ENCODE measurements at regions of chr1 and their contacts with region 1.

Region 1: DNA sequence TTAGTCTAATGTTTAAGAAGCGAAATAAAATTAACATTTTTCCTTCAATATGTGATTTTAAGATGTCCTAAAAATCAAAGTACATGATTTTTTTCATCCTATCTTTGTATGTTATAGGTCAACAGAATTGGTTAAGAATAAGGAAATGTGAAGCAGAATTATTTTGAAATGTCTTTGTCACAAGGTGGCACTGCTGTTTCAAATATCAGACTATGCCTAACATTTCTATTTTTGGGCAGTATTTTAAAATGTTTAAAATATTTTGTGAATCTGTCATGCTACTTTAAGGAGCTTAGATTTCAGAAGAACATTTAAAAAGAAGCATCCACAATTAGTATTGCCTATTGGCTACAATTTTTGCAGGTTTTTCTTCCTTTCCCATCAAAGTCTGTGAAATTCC is 38.7 kb downstream of the AMY1C start:
- DNase-seq: peak; percentile 42
- H3K4me3 Mint-ChIP-seq: no peak overlapping the region
- H3K27ac Mint-ChIP-seq: no peak overlapping the region
- H3K4me1 Mint-ChIP-seq: no peaks in the 10 kb centered on the region
- H3K27me3 Mint-ChIP-seq: peaks cover 5% of the 10 kb centered on the region
- CTCF ChIP-seq: peak; percentile 35

Region 2: DNA sequence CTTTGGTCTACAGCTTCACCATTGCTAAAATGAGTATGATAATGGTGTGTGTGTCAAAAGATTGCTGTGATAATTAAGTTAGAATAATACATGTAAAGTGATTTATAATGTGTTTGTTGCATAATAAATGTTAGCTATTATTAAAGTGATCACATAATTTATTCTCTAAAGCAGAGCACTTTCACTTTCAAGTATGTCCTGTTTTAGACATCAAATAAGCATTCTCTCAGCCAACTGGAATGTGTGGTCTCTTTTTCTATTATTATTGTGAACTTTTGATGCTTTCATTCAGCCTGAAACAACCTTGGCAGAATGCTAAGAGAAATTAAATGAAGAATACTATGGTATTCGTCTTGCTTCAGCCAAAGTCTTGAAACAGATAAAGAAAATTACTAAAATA is 577.3 kb before region 1 on chr1:
- CTCF ChIA-PET with region 1: no interaction called
- POLR2A ChIA-PET with region 1: no interaction called
- intact Hi-C with region 1: no loop called
- DNase-seq: no peak
- H3K4me3 Mint-ChIP-seq: no peak overlapping the region
- H3K27ac Mint-ChIP-seq: no peak overlapping the region
- H3K4me1 Mint-ChIP-seq: no peaks in the 10 kb centered on the region
- H3K27me3 Mint-ChIP-seq: peaks cover 47% of the 10 kb centered on the region
- CTCF ChIP-seq: no peak

Region 3: GRCh38 chr1:104132382-104132973 is 344.1 kb after region 1 on chr1:
- CTCF ChIA-PET with region 1: interaction called, 20 read pairs
- POLR2A ChIA-PET with region 1: no interaction called
- intact Hi-C with region 1: loop called (anchors 1 kb)
- DNase-seq: peak; percentile 63
- H3K4me3 Mint-ChIP-seq: no peak overlapping the region
- H3K27ac Mint-ChIP-seq: peak overlapping the region; percentile 8
- H3K4me1 Mint-ChIP-seq: peaks cover 9% of the 10 kb centered on the region
- H3K27me3 Mint-ChIP-seq: peaks cover 13% of the 10 kb centered on the region
- CTCF ChIP-seq: peak; percentile 53